A673 (cell line): ENCODE measurements at regions of chr6 and their contacts with region 1.

Region 1: GRCh38 chr6:106560996-106561685 is 68.2 kb downstream of the RTN4IP1 start:
- DNase-seq: no peak
- H3K4me3 ChIP-seq: no peak overlapping the region
- H3K27ac ChIP-seq: no peak overlapping the region
- H3K4me1 ChIP-seq: no peaks in the 10 kb centered on the region
- H3K27me3 ChIP-seq: no peaks in the 10 kb centered on the region
- CTCF ChIP-seq: no peak

Region 2: GRCh38 chr6:106444777-106445507 is 116.2 kb before region 1 on chr6:
- CTCF ChIA-PET with region 1: interaction called, 5 read pairs
- POLR2A ChIA-PET with region 1: no interaction called
- intact Hi-C with region 1: loop called (anchors 1 kb)
- DNase-seq: peak; percentile 72
- H3K4me3 ChIP-seq: no peak overlapping the region
- H3K27ac ChIP-seq: no peak overlapping the region
- H3K4me1 ChIP-seq: peaks cover 4% of the 10 kb centered on the region
- H3K27me3 ChIP-seq: peaks cover 12% of the 10 kb centered on the region
- CTCF ChIP-seq: peak; percentile 79

Region 3: GRCh38 chr6:106461084-106461483 is 100.1 kb before region 1 on chr6:
- CTCF ChIA-PET with region 1: no interaction called
- POLR2A ChIA-PET with region 1: no interaction called
- intact Hi-C with region 1: no loop called
- DNase-seq: no peak
- H3K4me3 ChIP-seq: no peak overlapping the region
- H3K27ac ChIP-seq: no peak overlapping the region
- H3K4me1 ChIP-seq: no peaks in the 10 kb centered on the region
- H3K27me3 ChIP-seq: peaks cover 7% of the 10 kb centered on the region
- CTCF ChIP-seq: no peak

Region 4: DNA sequence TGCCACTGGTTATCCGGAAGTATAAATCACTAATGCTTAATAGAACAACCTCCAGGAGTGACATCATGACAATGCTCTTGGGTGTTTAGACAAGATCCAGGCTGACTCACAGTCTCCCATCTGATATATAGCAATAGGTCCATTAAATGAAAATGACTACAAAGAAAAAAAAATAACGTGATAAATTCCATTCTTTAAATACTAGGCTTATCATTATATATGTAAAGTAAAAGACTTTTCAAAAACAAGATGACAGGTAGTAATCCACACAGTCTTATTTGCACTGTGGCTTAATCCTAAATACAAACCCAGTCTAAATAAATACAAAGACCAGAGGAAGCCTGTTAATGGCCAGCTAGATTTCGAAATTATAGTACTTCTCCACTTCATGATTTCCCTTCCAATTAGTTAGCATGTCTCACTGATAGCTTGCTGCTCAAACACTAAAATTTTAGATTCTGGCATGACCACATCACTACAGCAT is 703.3 kb after region 1 on chr6:
- CTCF ChIA-PET with region 1: no interaction called
- POLR2A ChIA-PET with region 1: no interaction called
- intact Hi-C with region 1: no loop called
- DNase-seq: peak; percentile 73
- H3K4me3 ChIP-seq: no peak overlapping the region
- H3K27ac ChIP-seq: no peak overlapping the region
- H3K4me1 ChIP-seq: peaks cover 18% of the 10 kb centered on the region
- H3K27me3 ChIP-seq: no peaks in the 10 kb centered on the region
- CTCF ChIP-seq: no peak